ENCODE measurements at regions of chr15 and their contacts with region 1.

Region 1: GRCh38 chr15:67165254-67166253 is 88.9 kb downstream of the AAGAB start:
- DNase-seq: peak; percentile 75 to 85 (median 85)
- ATAC-seq: peak; percentile 83 to 88
- H3K4me3 ChIP-seq: no peak overlapping the region
- H3K27ac ChIP-seq: peak overlapping the region; percentile 53
- H3K4me1 ChIP-seq: peaks cover 15% of the 10 kb centered on the region
- H3K27me3 ChIP-seq: no peaks in the 10 kb centered on the region

Region 2: DNA sequence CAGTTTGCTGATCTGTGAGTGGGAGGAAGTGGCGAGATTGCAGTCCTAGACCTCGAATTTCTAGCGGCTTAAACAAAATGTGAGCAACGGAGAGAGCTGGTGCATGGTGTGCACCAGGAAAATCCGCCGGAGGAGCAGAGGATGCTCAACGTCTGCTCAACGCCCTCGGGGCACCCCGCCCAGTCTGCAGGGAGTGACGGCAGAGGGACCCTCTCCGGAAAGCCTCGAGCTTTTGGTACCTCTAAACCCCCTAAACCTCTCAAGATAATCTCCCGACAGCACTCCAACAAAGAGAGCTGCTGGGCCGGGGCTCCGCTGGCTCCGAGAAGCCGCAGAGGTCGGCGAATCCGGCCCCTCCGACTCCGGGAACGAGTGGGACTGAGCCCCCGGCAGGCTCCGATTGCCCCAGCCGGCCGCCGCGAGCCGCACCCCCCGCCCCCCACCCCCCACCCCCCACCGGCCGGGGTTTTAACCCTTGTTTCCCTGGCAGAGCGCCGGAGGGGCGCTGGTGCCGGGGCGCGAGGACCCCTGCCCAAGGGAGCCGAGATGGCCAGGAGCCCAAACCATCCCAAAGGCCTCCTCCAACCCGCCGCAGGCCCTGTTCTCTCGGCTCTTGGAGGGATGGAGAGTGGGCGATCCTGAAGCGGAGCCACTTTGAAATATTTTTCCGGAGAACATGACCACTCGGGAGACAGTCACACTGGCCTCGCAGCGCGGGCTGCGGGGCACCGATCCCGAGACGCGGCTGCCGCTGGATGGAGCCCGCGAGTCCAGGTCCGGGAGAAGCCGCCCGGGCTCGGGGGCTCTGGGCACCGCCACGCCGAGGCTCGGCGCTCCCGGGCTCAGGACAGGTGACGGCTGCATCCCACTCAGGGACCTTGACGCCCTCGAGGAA is 913.5 kb before region 1 on chr15:
- intact Hi-C with region 1: no loop called
- DNase-seq: peak; percentile 53 to 85 (median 84)
- ATAC-seq: peak; percentile 79 to 87
- H3K4me3 ChIP-seq: peak overlapping the region; percentile 40
- H3K27ac ChIP-seq: no peak overlapping the region
- H3K4me1 ChIP-seq: peaks cover 2% of the 10 kb centered on the region
- H3K27me3 ChIP-seq: no peaks in the 10 kb centered on the region

Region 3: DNA sequence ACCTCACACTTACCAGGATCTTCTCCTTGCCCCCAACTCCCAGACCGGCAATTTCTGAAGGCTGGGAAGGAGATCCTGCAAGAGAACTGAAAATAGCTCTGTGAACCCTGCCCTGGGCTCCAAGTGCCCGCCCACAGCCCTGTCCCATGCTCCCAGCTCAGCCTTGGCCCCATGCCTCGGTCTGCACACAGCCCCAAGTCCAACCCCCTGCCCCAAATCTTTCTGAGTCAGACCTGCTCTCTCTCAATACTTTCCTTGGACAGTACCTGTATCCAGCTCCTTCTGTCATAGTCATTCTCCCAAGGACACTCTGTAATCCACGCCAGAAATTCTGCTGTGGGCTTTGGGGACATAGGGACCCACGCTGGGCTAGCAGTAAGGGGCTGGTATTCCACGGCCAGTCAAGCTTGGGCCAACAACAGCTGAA is 106.4 kb before region 1 on chr15:
- intact Hi-C with region 1: no loop called
- DNase-seq: peak; percentile 59 to 86 (median 79)
- ATAC-seq: peak; percentile 66 to 83
- H3K4me3 ChIP-seq: no peak overlapping the region
- H3K27ac ChIP-seq: no peak overlapping the region
- H3K4me1 ChIP-seq: no peaks in the 10 kb centered on the region
- H3K27me3 ChIP-seq: no peaks in the 10 kb centered on the region

Region 4: GRCh38 chr15:67109141-67110034 is 56.2 kb before region 1 on chr15:
- intact Hi-C with region 1: loop called in 1 of 4 experiments (anchors 10 kb)
- DNase-seq: peak; percentile 87 to 92 (median 91)
- ATAC-seq: peak; percentile 73 to 79
- H3K4me3 ChIP-seq: no peak overlapping the region
- H3K27ac ChIP-seq: peak overlapping the region; percentile 46
- H3K4me1 ChIP-seq: peaks cover 43% of the 10 kb centered on the region
- H3K27me3 ChIP-seq: no peaks in the 10 kb centered on the region